Colonic mucosa (tissue), 4 donors: ENCODE measurements at regions of chr5 and their contacts with region 1.

Region 1: DNA sequence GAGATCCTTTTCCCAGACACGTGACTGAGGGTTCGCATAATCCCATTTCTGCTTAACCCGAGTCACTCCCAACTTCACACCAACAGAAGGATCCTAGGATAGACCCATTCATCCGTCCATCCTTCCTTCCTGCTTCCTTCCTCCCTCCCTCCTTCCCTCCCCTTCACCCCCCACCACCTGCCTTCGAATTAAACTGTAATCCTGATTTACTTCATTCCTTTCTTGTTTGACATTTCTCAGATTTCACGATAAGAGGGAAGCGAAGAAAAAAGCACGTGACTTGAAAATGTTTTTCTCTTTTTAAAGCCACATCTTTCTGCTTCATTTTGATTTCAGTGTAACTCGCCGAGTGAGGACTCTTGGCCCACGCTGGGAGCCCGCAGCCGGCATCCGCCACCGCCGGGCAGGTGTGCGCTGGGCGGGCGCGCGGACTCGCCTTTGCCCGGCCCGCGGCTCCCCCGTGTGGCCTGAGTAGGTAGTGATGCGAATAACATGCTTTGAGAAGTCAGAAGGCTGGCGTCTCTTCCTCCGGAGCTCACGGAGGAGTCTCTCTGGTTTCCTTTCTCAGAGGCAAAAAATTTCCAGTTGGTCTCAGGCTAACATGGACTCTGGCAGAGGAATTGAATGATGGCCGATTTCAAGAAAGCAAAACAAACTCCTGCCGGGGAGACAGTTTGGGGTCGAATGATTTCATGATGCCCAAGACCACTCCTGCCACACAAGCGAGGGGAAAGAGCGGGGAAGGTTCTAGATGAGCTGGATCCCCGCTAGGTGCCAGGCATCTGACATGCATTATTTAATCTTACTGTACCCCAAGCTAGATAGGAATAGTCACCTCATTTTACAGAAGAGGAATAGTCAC is 117.7 kb downstream of the SLC12A2 start:
- DNase-seq: peak; percentile 93
- H3K4me3 ChIP-seq: no peak overlapping the region
- H3K27ac ChIP-seq: no peak overlapping the region
- H3K4me1 ChIP-seq: peaks cover 5% of the 10 kb centered on the region
- H3K27me3 ChIP-seq: no peaks in the 10 kb centered on the region
- CTCF ChIP-seq: peak; percentile 87

Region 2: GRCh38 chr5:127564002-127564769 is 637.1 kb before region 1 on chr5:
- intact Hi-C with region 1: loop called (anchors 5 kb)
- DNase-seq: peak; percentile 62
- H3K4me3 ChIP-seq: no peak overlapping the region
- H3K27ac ChIP-seq: no peak overlapping the region
- H3K4me1 ChIP-seq: no peaks in the 10 kb centered on the region
- H3K27me3 ChIP-seq: no peaks in the 10 kb centered on the region
- CTCF ChIP-seq: peak; percentile 55

Region 3: GRCh38 chr5:127739807-127740384 is 461.4 kb before region 1 on chr5:
- intact Hi-C with region 1: loop called (anchors 5 kb)
- DNase-seq: no peak
- H3K4me3 ChIP-seq: no peak overlapping the region
- H3K27ac ChIP-seq: no peak overlapping the region
- H3K4me1 ChIP-seq: no peaks in the 10 kb centered on the region
- H3K27me3 ChIP-seq: no peaks in the 10 kb centered on the region
- CTCF ChIP-seq: no peak

Region 4: GRCh38 chr5:127757576-127757975 is 443.7 kb before region 1 on chr5:
- intact Hi-C with region 1: loop called (anchors 5 kb)
- DNase-seq: peak; percentile 69
- H3K4me3 ChIP-seq: no peak overlapping the region
- H3K27ac ChIP-seq: peak overlapping the region; percentile 55
- H3K4me1 ChIP-seq: no peaks in the 10 kb centered on the region
- H3K27me3 ChIP-seq: no peaks in the 10 kb centered on the region
- CTCF ChIP-seq: peak; percentile 44

Region 5: DNA sequence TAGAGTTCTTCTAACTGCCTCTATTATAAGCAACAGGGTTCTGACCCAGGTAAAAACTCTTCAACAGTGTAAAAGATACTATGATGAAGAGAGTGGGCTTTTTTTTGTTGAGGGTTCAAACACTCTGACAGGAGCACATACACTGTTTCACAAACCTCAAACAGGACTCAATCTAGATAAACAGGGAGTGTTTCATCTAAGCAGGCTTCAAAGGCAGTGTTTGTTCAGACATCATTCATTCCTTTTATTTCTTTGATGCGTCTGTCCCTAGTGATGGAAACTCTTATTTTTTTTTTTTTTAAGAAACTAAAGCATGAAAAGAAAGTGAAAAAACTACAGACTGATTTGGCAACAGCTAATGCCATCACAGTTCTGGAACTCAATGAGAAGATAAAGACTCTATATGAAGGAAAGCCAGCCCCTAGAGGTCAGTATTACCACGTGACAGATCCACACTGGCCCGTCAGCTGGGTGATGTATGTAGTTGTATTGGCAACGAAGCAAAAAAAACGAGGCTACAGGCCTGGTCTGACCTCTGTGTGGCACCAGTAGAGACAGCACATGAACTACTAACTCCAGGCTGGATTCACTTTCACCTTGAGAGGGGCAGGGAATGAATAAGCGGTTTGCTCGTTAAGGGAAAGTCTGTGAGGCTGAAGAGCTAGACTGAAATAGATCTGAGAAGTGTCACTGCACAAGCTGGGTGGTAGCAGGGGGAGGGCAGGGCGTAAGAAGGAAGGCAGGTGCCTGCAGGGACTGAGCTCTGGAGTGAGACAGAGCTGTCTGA is 325.9 kb before region 1 on chr5:
- intact Hi-C with region 1: loop called (anchors 5 kb)
- DNase-seq: peak; percentile 81
- H3K4me3 ChIP-seq: no peak overlapping the region
- H3K27ac ChIP-seq: peak overlapping the region; percentile 19
- H3K4me1 ChIP-seq: peaks cover 3% of the 10 kb centered on the region
- H3K27me3 ChIP-seq: no peaks in the 10 kb centered on the region
- CTCF ChIP-seq: peak; percentile 33

Region 6: GRCh38 chr5:128857076-128857677 is 655.9 kb after region 1 on chr5:
- intact Hi-C with region 1: no loop called
- DNase-seq: no peak
- H3K4me3 ChIP-seq: no peak overlapping the region
- H3K27ac ChIP-seq: no peak overlapping the region
- H3K4me1 ChIP-seq: no peaks in the 10 kb centered on the region
- H3K27me3 ChIP-seq: no peaks in the 10 kb centered on the region
- CTCF ChIP-seq: no peak